Panc1 (cell line): ENCODE measurements at regions of chr6 and their contacts with region 1.

Region 1: DNA sequence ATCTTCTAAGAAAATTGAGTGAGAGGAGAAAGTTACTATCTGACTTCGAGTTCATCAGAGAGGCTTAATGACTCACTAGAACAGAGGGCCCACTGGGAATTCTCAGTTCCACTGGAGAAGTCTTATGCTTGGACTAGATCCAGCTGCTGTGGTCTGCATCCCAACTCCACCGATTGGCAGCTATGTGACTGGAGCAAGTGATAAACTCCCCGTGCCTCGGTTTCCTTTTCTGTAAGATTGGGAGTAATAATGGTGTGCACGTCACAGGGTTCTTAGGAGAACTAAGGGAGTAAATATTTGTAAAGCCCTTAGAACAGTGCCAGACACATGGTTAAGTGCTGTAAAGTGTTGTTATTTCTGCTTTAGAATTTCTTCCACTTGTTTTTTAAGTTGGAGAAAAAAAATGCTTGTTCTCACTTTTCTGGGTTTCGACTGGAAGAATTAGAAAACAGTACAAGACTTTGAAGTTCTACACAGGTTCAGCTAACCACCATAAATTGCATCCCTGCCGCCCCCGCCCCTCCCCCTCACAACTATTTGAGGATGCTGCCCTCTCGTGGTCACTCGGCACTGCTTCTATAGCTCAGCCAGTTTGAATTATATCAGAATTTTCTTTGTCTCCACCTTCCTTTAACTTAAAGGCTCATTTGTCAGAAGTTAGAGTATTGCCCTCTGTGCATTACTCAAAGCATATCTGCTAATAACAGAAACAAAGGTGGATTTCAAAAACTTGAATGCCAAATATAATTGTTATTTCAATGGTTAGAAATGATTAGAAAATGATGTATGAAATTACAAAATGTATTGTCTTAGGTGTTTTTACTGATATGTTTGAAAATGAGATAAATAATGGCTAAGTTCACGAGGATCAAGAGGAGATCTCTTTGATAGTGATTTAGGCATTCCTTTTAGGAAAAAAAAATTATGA is 95.0 kb upstream of the IFNGR1 start:
- DNase-seq: peak; percentile 12
- ATAC-seq: peak; percentile 90
- H3K4me3 ChIP-seq: no peak overlapping the region
- H3K27ac ChIP-seq: no peak overlapping the region
- H3K4me1 ChIP-seq: no peaks in the 10 kb centered on the region
- H3K27me3 ChIP-seq: peaks cover 2% of the 10 kb centered on the region; the same call in 1 of the 2 replicates
- CTCF ChIP-seq: peak; percentile 87

Region 2: GRCh38 chr6:136967876-136968752 is 346.1 kb before region 1 on chr6:
- CTCF ChIA-PET with region 1: interaction called, 11 read pairs
- POLR2A ChIA-PET with region 1: no interaction called
- in situ Hi-C with region 1: no loop called
- intact Hi-C with region 1: no loop called
- DNase-seq: peak; percentile 51
- ATAC-seq: peak; percentile 95
- H3K4me3 ChIP-seq: no peak overlapping the region
- H3K27ac ChIP-seq: no peak overlapping the region
- H3K4me1 ChIP-seq: no peaks in the 10 kb centered on the region
- H3K27me3 ChIP-seq: no peaks in the 10 kb centered on the region
- CTCF ChIP-seq: peak; percentile 88

Region 3: GRCh38 chr6:137076277-137077068 is 237.7 kb before region 1 on chr6:
- CTCF ChIA-PET with region 1: no interaction called
- POLR2A ChIA-PET with region 1: no interaction called
- in situ Hi-C with region 1: no loop called
- intact Hi-C with region 1: loop called (anchors 5 kb)
- DNase-seq: peak; percentile 71
- ATAC-seq: peak; percentile 100
- H3K4me3 ChIP-seq: no peak overlapping the region
- H3K27ac ChIP-seq: no peak overlapping the region
- H3K4me1 ChIP-seq: no peaks in the 10 kb centered on the region
- H3K27me3 ChIP-seq: peaks cover under 1% of the 10 kb centered on the region; the same call in 1 of the 2 replicates
- CTCF ChIP-seq: peak; percentile 88

Region 4: DNA sequence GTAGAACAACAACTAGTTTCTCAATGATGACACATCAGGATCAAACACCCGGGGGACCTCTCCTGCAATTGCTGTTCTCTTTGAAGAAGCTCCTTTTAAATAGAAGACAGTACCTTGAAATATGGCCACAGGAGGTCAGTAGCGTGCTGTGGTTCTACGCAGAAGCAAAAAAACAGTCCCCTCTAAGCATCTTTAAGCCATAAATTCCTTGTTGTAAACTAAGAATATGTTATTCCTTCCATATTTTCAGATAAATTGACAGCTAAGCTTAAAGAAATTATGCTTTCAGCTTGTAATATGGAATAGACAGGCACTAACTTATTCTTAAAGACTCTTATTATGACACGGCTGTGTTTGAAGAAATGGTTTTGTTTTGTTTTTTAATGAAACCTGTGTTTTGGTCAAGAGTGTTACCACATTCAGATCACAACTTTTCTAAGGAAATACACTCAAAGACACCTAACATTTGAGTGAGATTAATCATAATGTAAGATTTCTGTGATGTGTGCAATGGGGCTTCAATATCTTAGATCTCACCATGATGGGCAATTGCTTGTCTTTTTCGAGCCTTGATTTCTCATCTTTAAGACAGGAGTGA is 219.7 kb before region 1 on chr6:
- CTCF ChIA-PET with region 1: interaction called, 7 read pairs
- POLR2A ChIA-PET with region 1: no interaction called
- in situ Hi-C with region 1: no loop called
- intact Hi-C with region 1: loop called (anchors 5 kb)
- DNase-seq: peak; percentile 46
- ATAC-seq: no peak
- H3K4me3 ChIP-seq: no peak overlapping the region
- H3K27ac ChIP-seq: no peak overlapping the region
- H3K4me1 ChIP-seq: no peaks in the 10 kb centered on the region
- H3K27me3 ChIP-seq: no peaks in the 10 kb centered on the region; the same call in 1 of the 2 replicates
- CTCF ChIP-seq: peak; percentile 80; the same call in 1 of the 2 replicates

Region 5: DNA sequence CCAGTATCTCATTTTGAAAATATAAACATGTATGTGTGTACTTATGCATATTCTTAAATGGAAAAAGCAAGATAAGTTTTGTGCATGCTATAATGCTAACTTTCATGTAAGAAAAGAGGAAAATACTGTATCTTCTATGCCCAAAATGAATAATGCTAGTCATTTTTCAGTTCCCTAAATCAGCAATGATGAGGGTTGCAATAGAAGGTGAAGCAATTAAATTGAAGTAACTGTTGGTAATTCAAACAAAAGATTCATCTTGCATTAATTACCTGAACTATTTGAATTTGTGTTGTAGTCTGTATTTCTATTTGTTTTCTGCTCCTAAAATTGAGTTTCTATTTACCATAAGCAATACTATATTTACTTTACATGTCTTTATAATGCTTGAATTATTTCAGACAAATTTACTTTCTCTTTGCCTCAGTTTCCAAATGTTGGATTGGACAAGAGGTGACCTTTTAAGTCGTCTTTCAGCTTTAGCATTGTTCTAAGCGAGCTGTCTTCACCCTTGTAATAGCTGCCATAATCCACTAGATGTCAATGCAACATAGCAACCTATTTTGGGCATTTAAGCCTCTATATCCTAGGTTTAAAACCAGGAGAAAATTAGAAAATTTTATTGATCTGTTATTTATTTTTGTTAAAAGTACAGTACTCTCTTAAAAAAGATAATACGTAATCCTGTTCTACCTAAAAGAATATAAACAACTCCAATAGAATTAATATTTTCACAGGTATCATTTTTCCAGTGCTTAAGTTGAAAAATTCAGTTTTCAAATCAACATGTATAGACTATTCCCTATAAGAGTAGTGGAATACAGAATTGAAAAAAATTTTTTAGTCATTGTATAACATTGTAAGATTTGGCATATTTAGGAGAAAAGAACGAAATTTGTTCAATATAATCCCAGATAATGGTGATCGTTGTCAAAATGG is 42.7 kb before region 1 on chr6:
- CTCF ChIA-PET with region 1: interaction called, 4 read pairs
- POLR2A ChIA-PET with region 1: no interaction called
- in situ Hi-C with region 1: no loop called
- intact Hi-C with region 1: loop called (anchors 1 kb)
- DNase-seq: peak; percentile 42
- ATAC-seq: peak; percentile 86
- H3K4me3 ChIP-seq: no peak overlapping the region
- H3K27ac ChIP-seq: no peak overlapping the region
- H3K4me1 ChIP-seq: no peaks in the 10 kb centered on the region
- H3K27me3 ChIP-seq: no peaks in the 10 kb centered on the region
- CTCF ChIP-seq: peak; percentile 86; the same call in 1 of the 2 replicates

Region 6: GRCh38 chr6:137283940-137284810 is 30.0 kb before region 1 on chr6:
- CTCF ChIA-PET with region 1: interaction called, 13 read pairs
- POLR2A ChIA-PET with region 1: no interaction called
- in situ Hi-C with region 1: no loop called
- intact Hi-C with region 1: no loop called
- DNase-seq: no peak
- ATAC-seq: no peak
- H3K4me3 ChIP-seq: no peak overlapping the region
- H3K27ac ChIP-seq: no peak overlapping the region
- H3K4me1 ChIP-seq: no peaks in the 10 kb centered on the region
- H3K27me3 ChIP-seq: no peaks in the 10 kb centered on the region
- CTCF ChIP-seq: no peak